GM12878 (cell line): ENCODE measurements at regions of chr4 and their contacts with region 1.

Region 1: DNA sequence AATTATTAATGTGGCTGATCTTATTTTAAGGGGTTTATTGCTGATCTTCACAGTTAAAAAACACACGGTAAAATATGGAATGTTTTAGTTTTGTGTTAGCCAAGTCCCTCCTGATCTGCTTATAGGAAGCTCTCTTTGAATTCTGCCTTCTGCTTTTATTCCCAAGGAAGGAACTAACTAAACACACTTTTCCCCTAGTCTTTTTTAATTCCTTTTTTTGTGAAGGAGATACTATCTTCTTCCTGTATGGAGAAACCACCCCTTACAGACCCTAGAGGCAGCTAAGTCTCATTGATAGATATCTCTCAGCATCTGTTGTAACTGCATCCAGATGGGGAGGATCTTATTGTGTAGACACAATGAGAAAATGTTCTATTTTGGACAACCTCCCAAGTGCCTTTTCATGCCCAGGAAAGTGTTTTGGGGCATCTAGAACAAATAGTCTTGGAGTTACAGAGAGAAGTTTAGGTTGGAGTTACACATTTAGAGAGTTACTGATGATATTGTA is 64.4 kb downstream of the AFF1 start:
- DNase-seq: no peak
- ATAC-seq: no peak
- H3K4me3 ChIP-seq: no peak overlapping the region
- H3K27ac ChIP-seq: no peak overlapping the region; the same call in 1 of the 2 replicates
- H3K4me1 ChIP-seq: peaks cover 29% of the 10 kb centered on the region
- H3K27me3 ChIP-seq: no peaks in the 10 kb centered on the region
- CTCF ChIP-seq: no peak
- EP300 ChIP-seq: no peak
- POLR2A ChIP-seq: no peak
- RAD21 ChIP-seq: no peak

Region 2: DNA sequence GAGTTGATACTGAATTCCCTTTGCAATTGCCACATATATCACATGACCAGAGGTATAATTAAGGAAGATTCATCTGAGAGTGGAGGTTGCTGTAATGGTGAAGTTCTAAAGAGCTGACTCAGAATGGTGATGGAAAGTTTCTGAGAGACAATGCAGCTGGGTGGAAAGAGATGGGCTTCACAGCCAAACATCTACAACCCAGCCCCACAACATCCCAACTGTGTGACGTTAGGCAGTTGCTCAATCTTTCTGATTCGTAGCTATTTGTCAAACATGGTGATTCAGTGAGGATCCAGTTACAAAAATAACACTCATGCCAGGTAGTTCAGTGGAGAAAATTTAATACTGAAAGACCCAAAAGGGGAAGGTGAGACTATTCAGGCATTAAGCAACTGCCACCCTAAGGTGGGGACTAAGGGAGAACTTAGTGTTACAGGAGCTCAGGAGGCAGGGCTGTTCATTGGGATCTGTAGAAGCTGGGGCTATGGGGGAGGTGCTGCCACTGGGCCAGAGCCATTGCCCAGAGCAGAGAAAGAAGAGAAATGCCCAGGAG is 71.3 kb before region 1 on chr4:
- CTCF ChIA-PET with region 1: interaction called, 3 read pairs
- POLR2A ChIA-PET with region 1: interaction called, 123 read pairs
- RAD21 ChIA-PET with region 1: interaction called, 10 read pairs
- SMC1A ChIA-PET with region 1: interaction called, 97 read pairs
- in situ Hi-C with region 1: no loop called
- intact Hi-C with region 1: no loop called
- DNase-seq: no peak
- ATAC-seq: peak; percentile 12; the same call in 2 of the 3 replicates
- H3K4me3 ChIP-seq: no peak overlapping the region
- H3K27ac ChIP-seq: no peak overlapping the region; the same call in 1 of the 2 replicates
- H3K4me1 ChIP-seq: peaks cover 15% of the 10 kb centered on the region
- H3K27me3 ChIP-seq: no peaks in the 10 kb centered on the region
- CTCF ChIP-seq: no peak
- EP300 ChIP-seq: no peak
- POLR2A ChIP-seq: no peak
- RAD21 ChIP-seq: no peak

Region 3: GRCh38 chr4:86942185-86942666 is 57.0 kb before region 1 on chr4:
- CTCF ChIA-PET with region 1: interaction called, 9 read pairs
- POLR2A ChIA-PET with region 1: interaction called, 123 read pairs
- RAD21 ChIA-PET with region 1: interaction called, 267 read pairs
- SMC1A ChIA-PET with region 1: interaction called, 268 read pairs
- in situ Hi-C with region 1: no loop called
- intact Hi-C with region 1: no loop called
- DNase-seq: no peak
- ATAC-seq: no peak
- H3K4me3 ChIP-seq: peak overlapping the region; percentile 15; the same call in 1 of the 2 replicates
- H3K27ac ChIP-seq: no peak overlapping the region
- H3K4me1 ChIP-seq: peaks cover 45% of the 10 kb centered on the region
- H3K27me3 ChIP-seq: no peaks in the 10 kb centered on the region
- CTCF ChIP-seq: no peak
- EP300 ChIP-seq: no peak
- POLR2A ChIP-seq: no peak
- RAD21 ChIP-seq: no peak

Region 4: GRCh38 chr4:86961605-86962295 is 37.4 kb before region 1 on chr4:
- CTCF ChIA-PET with region 1: interaction called, 7 read pairs
- POLR2A ChIA-PET with region 1: interaction called, 29 read pairs
- RAD21 ChIA-PET with region 1: interaction called, 15 read pairs
- SMC1A ChIA-PET with region 1: interaction called, 107 read pairs
- in situ Hi-C with region 1: no loop called
- intact Hi-C with region 1: no loop called
- DNase-seq: peak; percentile 85
- ATAC-seq: peak; percentile 92
- H3K4me3 ChIP-seq: peak overlapping the region; percentile 61; the same call in 1 of the 2 replicates
- H3K27ac ChIP-seq: peak overlapping the region; percentile 80
- H3K4me1 ChIP-seq: peaks cover 70% of the 10 kb centered on the region
- H3K27me3 ChIP-seq: no peaks in the 10 kb centered on the region
- CTCF ChIP-seq: no peak
- EP300 ChIP-seq: peak; percentile 79 to 84; a peak in 3 of 4 replicates
- POLR2A ChIP-seq: peak; percentile 63
- RAD21 ChIP-seq: no peak

Region 5: GRCh38 chr4:86967798-86968197 is 31.4 kb before region 1 on chr4:
- CTCF ChIA-PET with region 1: no interaction called
- POLR2A ChIA-PET with region 1: interaction called, 13 read pairs
- RAD21 ChIA-PET with region 1: interaction called, 4 read pairs
- SMC1A ChIA-PET with region 1: interaction called, 107 read pairs
- in situ Hi-C with region 1: no loop called
- intact Hi-C with region 1: no loop called
- DNase-seq: no peak
- ATAC-seq: no peak
- H3K4me3 ChIP-seq: no peak overlapping the region
- H3K27ac ChIP-seq: no peak overlapping the region
- H3K4me1 ChIP-seq: peaks cover 39% of the 10 kb centered on the region
- H3K27me3 ChIP-seq: no peaks in the 10 kb centered on the region
- CTCF ChIP-seq: no peak
- EP300 ChIP-seq: no peak
- POLR2A ChIP-seq: no peak
- RAD21 ChIP-seq: no peak

Region 6: DNA sequence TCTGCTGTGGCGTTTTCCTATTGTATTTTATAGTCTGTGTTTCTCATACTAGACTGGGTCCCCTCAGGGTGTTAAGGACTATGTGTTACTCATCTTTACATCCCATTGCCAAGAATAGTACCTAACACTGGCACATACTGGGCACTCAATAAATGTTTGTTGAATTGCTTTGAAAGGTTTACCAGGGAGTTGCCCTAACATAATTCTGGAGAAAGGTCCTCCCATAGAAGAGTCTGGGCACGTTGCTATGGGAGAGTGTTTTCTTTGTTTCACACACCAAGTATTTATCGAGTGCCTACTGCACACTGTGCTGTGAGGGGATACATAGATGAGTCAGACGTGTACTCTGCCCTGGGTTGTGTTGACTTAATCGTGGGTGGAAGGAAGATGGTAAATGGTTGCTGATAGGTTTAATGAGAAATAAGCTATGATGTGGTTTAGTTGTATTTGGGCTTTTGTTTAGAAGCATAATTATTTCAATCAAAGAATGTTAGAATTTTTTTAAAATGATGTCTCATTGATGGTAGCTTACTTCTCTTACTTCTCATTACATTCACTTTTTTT is 21.5 kb before region 1 on chr4:
- CTCF ChIA-PET with region 1: interaction called, 7 read pairs
- POLR2A ChIA-PET with region 1: interaction called, 8 read pairs
- RAD21 ChIA-PET with region 1: interaction called, 53 read pairs
- SMC1A ChIA-PET with region 1: interaction called, 18 read pairs
- in situ Hi-C with region 1: no loop called
- intact Hi-C with region 1: no loop called
- DNase-seq: peak; percentile 67
- ATAC-seq: peak; percentile 96
- H3K4me3 ChIP-seq: peak overlapping the region; percentile 31; the same call in 1 of the 2 replicates
- H3K27ac ChIP-seq: peak overlapping the region; percentile 55
- H3K4me1 ChIP-seq: peaks cover 41% of the 10 kb centered on the region
- H3K27me3 ChIP-seq: no peaks in the 10 kb centered on the region
- CTCF ChIP-seq: no peak
- EP300 ChIP-seq: peak in 1 of 2 experiments; percentile 74; a peak in 1 of 4 replicates
- POLR2A ChIP-seq: no peak
- RAD21 ChIP-seq: no peak